Cardiac septum (tissue), 1 donor: ENCODE measurements at regions of chr7 and their contacts with region 1.

Region 1: GRCh38 chr7:98251841-98252639 is at the start of gene TECPR1:
- DNase-seq: peak; percentile 99
- total RNA-seq, gene TECPR1: 16.6 TPM

Region 2: GRCh38 chr7:98107446-98107769 is 144.6 kb before region 1 on chr7:
- intact Hi-C with region 1: no loop called
- DNase-seq: no peak

Region 3: DNA sequence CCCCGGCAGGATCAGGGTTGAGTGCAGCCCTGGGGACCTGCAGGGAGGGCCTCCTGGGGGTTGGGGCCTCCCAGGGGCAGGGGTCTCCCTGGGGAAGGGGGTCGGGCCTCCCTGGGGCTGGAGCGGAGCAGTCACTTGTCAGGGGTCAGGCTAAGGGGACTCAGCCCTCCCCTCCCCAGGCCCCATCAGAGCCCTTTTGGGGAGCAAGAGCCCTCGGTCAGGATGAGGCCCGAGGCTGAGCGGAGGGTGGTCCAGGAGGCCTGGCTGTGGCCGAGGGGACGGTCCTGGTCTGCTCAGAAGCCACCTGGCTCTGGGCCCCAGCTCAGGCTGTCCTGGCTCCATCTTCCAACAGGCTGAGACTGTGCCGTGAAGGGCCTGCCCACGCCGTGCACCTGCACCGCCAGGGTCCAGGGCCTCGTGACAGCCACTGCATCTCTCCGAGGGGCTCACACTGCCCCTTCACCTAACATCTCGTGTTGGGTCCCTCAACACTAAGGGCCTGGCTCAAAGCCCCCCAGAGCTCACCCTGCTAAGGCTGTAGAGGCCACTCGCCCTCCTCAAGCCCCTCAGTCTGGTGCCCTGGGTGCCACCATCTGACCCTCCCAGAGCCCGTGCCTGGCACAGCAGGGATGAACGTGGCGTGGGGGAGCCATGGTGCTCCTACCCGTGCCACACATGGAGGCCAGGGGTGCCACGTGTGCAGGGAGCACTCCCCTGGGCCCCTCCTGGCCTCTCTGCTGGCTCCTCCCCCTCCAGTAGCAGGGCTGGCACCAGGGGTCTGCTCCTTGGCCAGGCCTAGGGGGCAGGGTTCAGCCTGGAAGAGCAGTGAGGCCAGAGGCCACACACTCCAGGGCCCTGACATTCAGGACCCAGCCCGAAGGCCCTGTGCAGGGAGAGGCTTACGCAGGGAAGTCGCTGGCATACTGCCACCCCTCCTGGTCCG is 27.9 kb before region 1 on chr7:
- intact Hi-C with region 1: no loop called
- DNase-seq: no peak

Region 4: GRCh38 chr7:98280791-98281756 is 29.0 kb after region 1 on chr7 and contains the start of gene BRI3:
- intact Hi-C with region 1: loop called (anchors 1 kb)
- DNase-seq: peak; percentile 95
- total RNA-seq, gene BRI3: 162 TPM

Region 5: GRCh38 chr7:98420966-98421612 is 169.0 kb after region 1 on chr7:
- intact Hi-C with region 1: no loop called
- DNase-seq: peak; percentile 80

Region 6: GRCh38 chr7:98591926-98592325 is 339.9 kb after region 1 on chr7:
- intact Hi-C with region 1: no loop called
- DNase-seq: no peak